PC-9 (cell line): ENCODE measurements at regions of chr5 and their contacts with region 1.

Region 1: DNA sequence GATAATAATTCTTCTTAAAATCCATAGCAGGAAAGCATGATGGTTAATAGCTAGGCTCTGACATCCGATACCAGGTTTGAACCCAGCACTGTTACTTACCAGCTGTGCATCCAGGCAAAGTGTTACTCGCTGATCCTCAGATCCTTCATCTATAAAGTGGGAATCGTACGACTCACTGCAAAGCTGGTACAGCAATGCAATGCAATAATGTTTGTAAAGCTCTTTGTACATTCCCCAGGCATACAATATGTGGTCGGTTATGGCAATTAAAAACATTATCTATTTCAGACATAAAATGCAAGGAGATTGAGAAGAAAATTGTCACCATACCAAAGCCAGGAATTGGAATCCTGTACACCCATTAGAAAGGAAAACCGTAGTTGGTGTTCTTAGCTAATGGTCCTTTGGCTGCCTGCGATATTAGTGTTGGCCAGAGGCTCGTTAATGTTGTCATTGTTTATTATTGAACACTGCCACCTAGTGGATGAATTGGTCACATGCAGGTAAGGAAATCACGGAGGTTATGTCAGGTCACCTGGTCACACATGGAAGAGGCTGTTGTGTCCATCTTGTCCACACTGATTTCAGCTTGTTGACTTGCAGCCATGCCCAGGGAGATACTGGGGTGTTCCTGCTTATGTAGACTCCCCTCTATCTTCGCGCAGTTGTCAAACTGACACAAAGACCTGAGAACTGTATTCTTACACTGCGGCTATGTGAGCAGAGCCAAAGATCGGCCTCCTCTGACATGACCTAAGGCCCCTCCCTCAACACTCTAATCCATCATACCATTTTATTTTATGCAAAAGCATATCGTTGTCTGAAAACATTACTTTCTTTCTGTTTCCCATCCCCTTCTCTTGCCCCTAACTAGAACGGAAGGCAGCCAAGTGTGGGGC is 87.5 kb upstream of the PPP2R2B start:
- DNase-seq: peak; percentile 51 to 54
- H3K4me3 ChIP-seq: no peak overlapping the region
- H3K27ac ChIP-seq: no peak overlapping the region
- H3K4me1 ChIP-seq: no peaks in the 10 kb centered on the region
- H3K27me3 ChIP-seq: peaks cover 17% of the 10 kb centered on the region; the same call in 1 of the 2 replicates
- CTCF ChIP-seq: peak; percentile 87

Region 2: DNA sequence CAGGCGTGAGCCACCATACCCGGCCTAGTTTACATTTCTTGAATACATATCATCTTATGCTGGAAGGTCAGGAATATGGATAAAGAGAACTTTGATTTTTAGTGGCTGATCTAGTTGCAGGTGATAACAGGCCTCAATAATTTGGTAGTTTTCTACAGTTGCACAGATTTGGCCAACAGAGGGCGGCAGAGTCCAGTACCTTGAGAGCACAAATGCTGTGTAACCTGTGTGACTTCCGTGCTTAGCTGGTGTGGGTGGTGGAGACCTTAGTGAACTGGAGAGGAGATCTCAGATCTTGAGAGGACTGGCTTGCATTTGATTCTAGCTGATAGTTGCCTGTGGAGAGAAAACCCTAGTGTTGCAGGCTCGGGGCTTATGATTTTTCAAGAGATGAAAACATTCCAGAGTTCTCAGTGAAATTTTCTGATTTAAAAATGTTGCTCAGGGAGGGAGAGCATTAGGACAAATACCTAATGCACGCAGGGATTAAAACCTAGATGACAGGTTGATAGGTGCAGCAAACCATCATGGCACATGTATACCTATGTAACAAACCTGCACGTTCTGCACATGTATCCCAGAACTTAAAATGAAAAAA is 432.7 kb before region 1 on chr5:
- CTCF ChIA-PET with region 1: interaction called, 14 read pairs
- POLR2A ChIA-PET with region 1: no interaction called
- intact Hi-C with region 1: loop called (anchors 1 kb)
- DNase-seq: peak; percentile 39 to 65
- H3K4me3 ChIP-seq: no peak overlapping the region
- H3K27ac ChIP-seq: no peak overlapping the region
- H3K4me1 ChIP-seq: no peaks in the 10 kb centered on the region
- H3K27me3 ChIP-seq: peaks cover 4% of the 10 kb centered on the region; the same call in 1 of the 2 replicates
- CTCF ChIP-seq: peak; percentile 88

Region 3: DNA sequence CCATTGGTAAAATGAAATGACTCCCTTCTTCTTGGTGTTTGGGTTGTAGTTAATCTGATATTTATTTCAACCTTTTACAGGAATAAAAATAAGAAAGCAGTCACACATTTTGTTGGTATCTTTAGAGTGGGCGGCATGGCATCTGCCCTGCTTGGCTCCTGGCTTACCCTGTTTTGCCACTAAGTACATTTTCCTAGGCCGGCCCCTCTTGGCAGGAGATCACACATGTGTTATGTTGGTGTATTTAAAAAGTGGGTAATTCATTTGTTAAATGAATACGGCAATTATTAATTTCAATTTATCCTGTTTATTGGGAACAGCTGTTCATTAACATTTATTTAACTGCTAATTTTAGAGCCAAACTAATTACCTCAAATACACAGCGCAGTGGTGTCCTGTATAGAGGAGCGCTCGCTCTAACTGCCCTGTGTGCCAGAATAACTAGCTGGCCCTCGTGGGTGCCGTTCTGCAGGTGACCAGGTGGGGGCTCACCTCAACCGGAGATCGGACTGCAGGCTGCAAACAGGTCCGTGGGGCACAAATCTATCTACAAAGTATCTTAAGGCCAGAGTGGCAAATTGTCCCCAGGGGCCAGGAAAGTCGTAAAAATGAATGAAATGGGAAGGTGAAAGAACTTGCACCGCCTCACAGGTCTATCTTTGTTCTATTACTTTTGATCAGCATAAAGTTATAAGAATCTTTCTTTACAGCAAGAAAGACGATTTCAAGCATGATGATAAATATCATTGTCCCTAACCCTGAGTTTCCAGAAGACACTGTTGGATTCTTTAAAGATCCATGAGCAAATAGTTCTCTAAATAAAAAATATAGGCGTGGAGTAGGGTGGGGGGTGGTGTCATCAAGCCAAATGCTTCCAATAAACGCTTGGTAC is 423.8 kb before region 1 on chr5:
- CTCF ChIA-PET with region 1: interaction called, 18 read pairs
- POLR2A ChIA-PET with region 1: no interaction called
- intact Hi-C with region 1: loop called (anchors 1 kb)
- DNase-seq: peak; percentile 42 to 75
- H3K4me3 ChIP-seq: no peak overlapping the region
- H3K27ac ChIP-seq: no peak overlapping the region
- H3K4me1 ChIP-seq: no peaks in the 10 kb centered on the region
- H3K27me3 ChIP-seq: peaks cover 4% of the 10 kb centered on the region; the same call in 1 of the 2 replicates
- CTCF ChIP-seq: peak; percentile 94

Region 4: GRCh38 chr5:146565764-146566367 is 400.1 kb before region 1 on chr5:
- CTCF ChIA-PET with region 1: interaction called, 5 read pairs
- POLR2A ChIA-PET with region 1: no interaction called
- intact Hi-C with region 1: loop called (anchors 1 kb)
- DNase-seq: peak in 1 of 2 experiments; percentile 37
- H3K4me3 ChIP-seq: no peak overlapping the region
- H3K27ac ChIP-seq: no peak overlapping the region
- H3K4me1 ChIP-seq: no peaks in the 10 kb centered on the region
- H3K27me3 ChIP-seq: 0 out of 2 replicates have a peak, but pooled peaks cover 10% of the 10 kb centered on the region
- CTCF ChIP-seq: peak; percentile 61

Region 5: GRCh38 chr5:146662229-146662628 is 303.8 kb before region 1 on chr5:
- CTCF ChIA-PET with region 1: no interaction called
- POLR2A ChIA-PET with region 1: no interaction called
- intact Hi-C with region 1: loop called (anchors 5 kb)
- DNase-seq: no peak
- H3K4me3 ChIP-seq: no peak overlapping the region
- H3K27ac ChIP-seq: no peak overlapping the region
- H3K4me1 ChIP-seq: no peaks in the 10 kb centered on the region
- H3K27me3 ChIP-seq: peaks cover 14% of the 10 kb centered on the region; the same call in 1 of the 2 replicates
- CTCF ChIP-seq: peak; percentile 75

Region 6: GRCh38 chr5:146805081-146805480 is 160.9 kb before region 1 on chr5:
- CTCF ChIA-PET with region 1: no interaction called
- POLR2A ChIA-PET with region 1: no interaction called
- intact Hi-C with region 1: no loop called
- DNase-seq: no peak
- H3K4me3 ChIP-seq: no peak overlapping the region
- H3K27ac ChIP-seq: no peak overlapping the region
- H3K4me1 ChIP-seq: no peaks in the 10 kb centered on the region
- H3K27me3 ChIP-seq: peaks cover 36% of the 10 kb centered on the region
- CTCF ChIP-seq: no peak

Region 7: GRCh38 chr5:147188200-147189108 is 222.4 kb after region 1 on chr5:
- CTCF ChIA-PET with region 1: interaction called, 3 read pairs
- POLR2A ChIA-PET with region 1: no interaction called
- intact Hi-C with region 1: loop called (anchors 5 kb)
- DNase-seq: peak in 1 of 2 experiments; percentile 29
- H3K4me3 ChIP-seq: no peak overlapping the region
- H3K27ac ChIP-seq: no peak overlapping the region
- H3K4me1 ChIP-seq: no peaks in the 10 kb centered on the region
- H3K27me3 ChIP-seq: 0 out of 2 replicates have a peak, but pooled peaks cover 3% of the 10 kb centered on the region
- CTCF ChIP-seq: peak; percentile 90

Region 8: DNA sequence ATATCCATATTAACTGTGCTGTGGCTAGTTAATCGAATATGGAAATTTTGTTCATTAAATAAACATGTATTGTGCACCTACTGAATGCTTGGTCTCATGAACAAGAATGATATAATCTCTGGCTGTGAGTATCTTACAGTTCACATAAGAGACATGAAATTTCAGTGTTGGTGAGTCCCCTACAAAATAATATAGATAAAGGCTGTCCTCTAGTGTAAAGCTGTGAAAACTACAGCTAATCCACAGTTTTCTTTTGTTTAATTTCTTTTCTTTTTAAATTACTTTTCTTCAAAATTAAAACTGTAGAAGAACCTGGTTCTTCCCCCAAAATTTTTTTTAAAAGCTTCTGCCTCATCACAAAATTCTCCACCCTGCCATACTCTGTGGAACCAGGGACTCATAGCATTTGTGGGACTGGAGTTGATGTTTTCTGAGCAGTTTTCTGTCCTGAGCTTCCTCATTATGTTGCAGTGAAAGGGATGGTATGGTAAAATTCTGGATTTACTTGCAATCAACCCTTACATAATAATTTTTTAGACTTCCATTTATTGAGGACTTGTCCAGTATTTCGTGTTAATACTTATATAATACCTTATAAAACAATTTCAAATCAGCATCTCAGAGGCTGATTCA is 403.8 kb after region 1 on chr5:
- CTCF ChIA-PET with region 1: no interaction called
- POLR2A ChIA-PET with region 1: no interaction called
- intact Hi-C with region 1: loop called (anchors 5 kb)
- DNase-seq: no peak
- H3K4me3 ChIP-seq: no peak overlapping the region
- H3K27ac ChIP-seq: no peak overlapping the region
- H3K4me1 ChIP-seq: no peaks in the 10 kb centered on the region
- H3K27me3 ChIP-seq: no peaks in the 10 kb centered on the region; the same call in 1 of the 2 replicates
- CTCF ChIP-seq: peak; percentile 75